Prostate gland (tissue), 2 donors: ENCODE measurements at regions of chr3 and their contacts with region 1.

Region 1: GRCh38 chr3:9843715-9844438 is at the start of gene RPUSD3:
- DNase-seq: peak; percentile 98
- H3K4me3 ChIP-seq: peak within 1 kb of the TSS; percentile 52 to 59
- H3K27ac ChIP-seq: peak within 1 kb of the TSS; percentile 83 to 85
- H3K4me1 ChIP-seq: no peaks in the 10 kb centered on the region
- H3K27me3 ChIP-seq: no peaks in the 10 kb centered on the region
- CTCF ChIP-seq: peak in 1 of 4 experiments; percentile 3
- POLR2A ChIP-seq: peak; percentile 83
- total RNA-seq, gene RPUSD3: 40.9 to 44.6 TPM

Region 2: GRCh38 chr3:9731206-9732079 is 112.4 kb before region 1 on chr3 and contains the start of gene BRPF1:
- intact Hi-C with region 1: loop called (anchors 5 kb)
- DNase-seq: peak; percentile 99
- H3K4me3 ChIP-seq: peak within 1 kb of the TSS; percentile 97 to 98
- H3K27ac ChIP-seq: peak within 1 kb of the TSS; percentile 96 to 97
- H3K4me1 ChIP-seq: peaks cover 14% of the 10 kb centered on the region
- H3K27me3 ChIP-seq: no peaks in the 10 kb centered on the region
- CTCF ChIP-seq: peak; percentile 18 to 39 (median 30)
- POLR2A ChIP-seq: no peak
- total RNA-seq, gene BRPF1: 14.2 to 43.5 TPM

Region 3: GRCh38 chr3:9932843-9933560 is 89.1 kb after region 1 on chr3:
- intact Hi-C with region 1: loop called (anchors 5 kb)
- DNase-seq: peak; percentile 63
- H3K4me3 ChIP-seq: peak overlapping the region; percentile 56 to 62
- H3K27ac ChIP-seq: peak overlapping the region; percentile 91 to 93
- H3K4me1 ChIP-seq: peaks cover 7% of the 10 kb centered on the region
- H3K27me3 ChIP-seq: no peaks in the 10 kb centered on the region
- CTCF ChIP-seq: peak; percentile 26 to 89 (median 79)
- POLR2A ChIP-seq: no peak